ENCODE measurements at regions of chr4 and their contacts with region 1.

Region 1: DNA sequence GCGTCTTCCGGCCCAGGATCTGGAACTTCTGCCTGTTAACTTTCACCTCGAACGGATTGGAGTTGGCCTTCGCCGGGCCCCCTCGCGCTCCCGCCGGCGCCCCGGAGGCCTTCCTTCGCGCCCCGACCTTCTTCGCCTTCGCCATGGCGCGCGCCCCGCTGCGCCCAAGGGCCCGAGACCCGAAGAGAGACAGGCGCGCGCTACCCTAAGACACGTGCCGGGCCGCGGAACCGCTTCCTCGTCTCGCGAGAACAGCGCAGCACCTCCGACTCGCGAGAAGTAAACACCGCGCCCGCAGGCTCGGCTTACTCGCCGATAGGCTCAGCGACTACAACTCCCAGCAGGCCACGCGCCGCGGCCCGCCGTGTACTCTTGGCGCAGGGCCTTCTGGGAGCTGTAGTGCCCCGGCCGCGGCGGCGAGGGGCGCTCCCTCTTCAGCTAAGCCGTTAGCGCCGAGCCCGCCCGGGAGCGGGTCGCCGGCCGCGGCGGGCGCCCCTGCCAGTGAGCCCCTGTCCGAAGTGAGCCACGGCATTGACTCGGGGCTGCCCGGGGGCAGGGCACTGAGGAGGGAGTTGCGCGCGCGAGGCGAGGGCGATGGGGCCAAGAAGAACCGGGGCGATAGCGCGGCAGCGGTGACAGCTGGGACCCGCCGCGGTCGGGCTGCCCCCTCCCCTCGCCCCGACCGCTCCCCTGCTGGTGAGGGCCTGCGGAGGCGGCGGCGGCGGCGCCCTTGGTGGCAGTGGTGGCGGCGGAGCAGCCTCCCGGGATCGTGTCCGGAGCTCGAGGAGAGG is at the starts of genes GRK4 and NOP14:
- DNase-seq: peak; percentile 92 to 99 (median 97)
- ATAC-seq: peak; percentile 87
- H3K4me3 ChIP-seq: peak within 1 kb of the TSS; percentile 82 to 86
- H3K4me3 Mint-ChIP-seq: peak within 1 kb of the TSS; percentile 78
- H3K27ac ChIP-seq: peak within 1 kb of the TSS; percentile 74 to 88
- H3K27ac Mint-ChIP-seq: peak within 1 kb of the TSS; percentile 94
- H3K4me1 ChIP-seq: peaks cover 23% of the 10 kb centered on the region
- H3K4me1 Mint-ChIP-seq: peaks cover 43% of the 10 kb centered on the region
- H3K27me3 ChIP-seq: no peaks in the 10 kb centered on the region
- H3K27me3 Mint-ChIP-seq: no peaks in the 10 kb centered on the region
- CTCF ChIP-seq: peak; percentile 45
- total RNA-seq, gene GRK4: 1.2 to 1.3 TPM
- total RNA-seq, gene NOP14: 23.5 to 23.9 TPM

Region 2: GRCh38 chr4:1712216-1713002 is 1251.0 kb before region 1 on chr4 and contains the start of gene SLBP:
- CTCF ChIA-PET with region 1: no interaction called
- POLR2A ChIA-PET with region 1: no interaction called
- intact Hi-C with region 1: loop called in 1 of 2 experiments (anchors 10 kb)
- DNase-seq: peak; percentile 96 to 99 (median 99)
- ATAC-seq: peak; percentile 87
- H3K4me3 ChIP-seq: peak within 1 kb of the TSS; percentile 82 to 95
- H3K4me3 Mint-ChIP-seq: peak within 1 kb of the TSS; percentile 94
- H3K27ac ChIP-seq: peak within 1 kb of the TSS; percentile 95 to 97
- H3K27ac Mint-ChIP-seq: peak within 1 kb of the TSS; percentile 94
- H3K4me1 ChIP-seq: peaks cover 42% of the 10 kb centered on the region
- H3K4me1 Mint-ChIP-seq: peaks cover 60% of the 10 kb centered on the region
- H3K27me3 ChIP-seq: no peaks in the 10 kb centered on the region
- H3K27me3 Mint-ChIP-seq: no peaks in the 10 kb centered on the region
- CTCF ChIP-seq: no peak
- total RNA-seq, gene SLBP: 61.2 to 62.6 TPM

Region 3: GRCh38 chr4:2418650-2419571 is 544.5 kb before region 1 on chr4 and contains the start of gene CFAP99:
- CTCF ChIA-PET with region 1: no interaction called
- POLR2A ChIA-PET with region 1: no interaction called
- intact Hi-C with region 1: loop called in 1 of 2 experiments (anchors 5 kb)
- DNase-seq: peak; percentile 97 to 99 (median 98)
- ATAC-seq: peak; percentile 87
- H3K4me3 ChIP-seq: peak within 1 kb of the TSS; percentile 52 to 56
- H3K4me3 Mint-ChIP-seq: peak within 1 kb of the TSS; percentile 87
- H3K27ac ChIP-seq: peak within 1 kb of the TSS; percentile 73 to 76
- H3K27ac Mint-ChIP-seq: peak within 1 kb of the TSS; percentile 94
- H3K4me1 ChIP-seq: peaks cover 43% of the 10 kb centered on the region
- H3K4me1 Mint-ChIP-seq: peaks cover 44% of the 10 kb centered on the region
- H3K27me3 ChIP-seq: peaks cover 6 to 10% of the 10 kb centered on the region in 2 experiments
- H3K27me3 Mint-ChIP-seq: peaks cover 14% of the 10 kb centered on the region
- CTCF ChIP-seq: peak; percentile 58
- total RNA-seq, gene CFAP99: 0.22 to 0.36 TPM

Region 4: DNA sequence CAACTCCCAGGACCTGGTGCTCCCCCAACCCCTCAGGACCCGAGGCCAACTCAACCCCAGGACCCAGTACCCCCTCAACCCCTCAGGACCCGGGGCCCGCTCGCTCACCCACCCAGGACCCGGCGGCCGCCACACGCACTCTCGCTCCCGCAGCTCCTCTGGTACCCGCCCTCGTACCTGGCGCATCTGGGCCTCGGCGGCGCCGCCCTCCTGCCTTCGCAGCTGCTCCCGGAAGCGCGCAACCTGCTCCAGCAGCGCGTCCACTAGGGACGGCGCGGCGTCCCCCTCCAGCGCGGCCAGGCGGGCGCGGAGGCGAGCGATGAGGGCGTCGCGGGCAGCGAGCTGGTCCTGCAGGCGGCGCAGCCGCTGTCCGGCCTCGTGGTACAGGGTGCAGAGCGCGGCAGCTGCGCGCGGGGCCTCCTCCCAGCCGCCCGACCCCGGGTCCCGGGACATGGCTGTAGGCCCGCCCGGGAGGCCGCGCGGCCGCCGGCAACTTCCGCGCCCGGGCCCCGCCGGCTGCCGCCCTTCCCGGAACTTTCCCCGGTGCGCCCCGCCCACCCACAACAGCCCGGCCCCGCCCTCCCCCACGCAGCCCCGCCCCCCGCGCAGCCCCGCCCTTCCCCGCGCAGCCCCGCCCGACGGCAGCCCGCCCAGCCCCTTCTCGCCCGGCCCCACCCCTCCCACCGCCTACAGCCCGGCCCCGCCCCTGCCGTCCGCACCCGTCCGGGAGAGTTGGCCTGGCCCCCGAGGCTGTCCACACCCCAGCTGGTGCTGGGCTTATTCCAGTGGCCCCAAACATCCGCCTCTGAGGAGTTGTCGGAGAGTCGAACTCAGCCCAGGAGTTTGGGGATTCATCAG is 207.3 kb before region 1 on chr4 and contains the start of gene TNIP2:
- CTCF ChIA-PET with region 1: no interaction called
- POLR2A ChIA-PET with region 1: no interaction called
- intact Hi-C with region 1: loop called (anchors 1 to 2 kb)
- DNase-seq: peak; percentile 55 to 88 (median 75)
- ATAC-seq: peak; percentile 83
- H3K4me3 ChIP-seq: peak within 1 kb of the TSS; percentile 57 to 65
- H3K4me3 Mint-ChIP-seq: peak within 1 kb of the TSS; percentile 76
- H3K27ac ChIP-seq: peak within 1 kb of the TSS; percentile 19 to 63
- H3K27ac Mint-ChIP-seq: peak within 1 kb of the TSS; percentile 67
- H3K4me1 ChIP-seq: peaks cover 17% of the 10 kb centered on the region
- H3K4me1 Mint-ChIP-seq: peaks cover 37% of the 10 kb centered on the region
- H3K27me3 ChIP-seq: no peaks in the 10 kb centered on the region
- H3K27me3 Mint-ChIP-seq: no peaks in the 10 kb centered on the region
- CTCF ChIP-seq: peak; percentile 22
- total RNA-seq, gene TNIP2: 50.9 to 56.5 TPM

Region 5: GRCh38 chr4:2934813-2935761 is 28.3 kb before region 1 on chr4:
- CTCF ChIA-PET with region 1: interaction called, 5 read pairs
- POLR2A ChIA-PET with region 1: interaction called, 22 read pairs
- intact Hi-C with region 1: loop called (anchors 1 kb)
- DNase-seq: peak; percentile 91 to 99 (median 97)
- ATAC-seq: peak; percentile 55
- H3K4me3 ChIP-seq: peak overlapping the region; percentile 71 to 95
- H3K4me3 Mint-ChIP-seq: peak overlapping the region; percentile 85
- H3K27ac ChIP-seq: peak overlapping the region; percentile 94 to 96
- H3K27ac Mint-ChIP-seq: peak overlapping the region; percentile 90
- H3K4me1 ChIP-seq: peaks cover 55% of the 10 kb centered on the region
- H3K4me1 Mint-ChIP-seq: peaks cover 46% of the 10 kb centered on the region
- H3K27me3 ChIP-seq: no peaks in the 10 kb centered on the region
- H3K27me3 Mint-ChIP-seq: no peaks in the 10 kb centered on the region
- CTCF ChIP-seq: no peak

Region 6: GRCh38 chr4:3074078-3074795 is 110.9 kb after region 1 on chr4 and contains the starts of genes HTT and HTT-AS:
- CTCF ChIA-PET with region 1: no interaction called
- POLR2A ChIA-PET with region 1: interaction called, 3 read pairs
- intact Hi-C with region 1: loop called (anchors 1 kb)
- DNase-seq: peak; percentile 93 to 98 (median 97)
- ATAC-seq: peak; percentile 83
- H3K4me3 ChIP-seq: peak within 1 kb of the TSS; percentile 88 to 100
- H3K4me3 Mint-ChIP-seq: peak within 1 kb of the TSS; percentile 93
- H3K27ac ChIP-seq: peak within 1 kb of the TSS; percentile 69 to 89
- H3K27ac Mint-ChIP-seq: peak within 1 kb of the TSS; percentile 95
- H3K4me1 ChIP-seq: peaks cover 18% of the 10 kb centered on the region
- H3K4me1 Mint-ChIP-seq: peaks cover 25% of the 10 kb centered on the region
- H3K27me3 ChIP-seq: no peaks in the 10 kb centered on the region
- H3K27me3 Mint-ChIP-seq: no peaks in the 10 kb centered on the region
- CTCF ChIP-seq: no peak
- total RNA-seq, gene HTT: 60.3 to 69.4 TPM
- total RNA-seq, gene HTT-AS: not detected

Measured in CD8-positive, alpha-beta T cell (primary cell).